Caco-2 (cell line): ENCODE measurements at regions of chr12 and their contacts with region 1.

Region 1: GRCh38 chr12:26360062-26360461 is 164.7 kb downstream of the SSPN start:
- DNase-seq: no peak
- H3K4me3 ChIP-seq: no peak overlapping the region
- H3K4me3 Mint-ChIP-seq: no peak overlapping the region
- H3K27ac Mint-ChIP-seq: no peak overlapping the region
- H3K4me1 ChIP-seq: peaks cover 12% of the 10 kb centered on the region
- H3K4me1 Mint-ChIP-seq: peaks cover 6% of the 10 kb centered on the region
- H3K27me3 ChIP-seq: no peaks in the 10 kb centered on the region
- H3K27me3 Mint-ChIP-seq: no peaks in the 10 kb centered on the region
- CTCF ChIP-seq: no peak

Region 2: DNA sequence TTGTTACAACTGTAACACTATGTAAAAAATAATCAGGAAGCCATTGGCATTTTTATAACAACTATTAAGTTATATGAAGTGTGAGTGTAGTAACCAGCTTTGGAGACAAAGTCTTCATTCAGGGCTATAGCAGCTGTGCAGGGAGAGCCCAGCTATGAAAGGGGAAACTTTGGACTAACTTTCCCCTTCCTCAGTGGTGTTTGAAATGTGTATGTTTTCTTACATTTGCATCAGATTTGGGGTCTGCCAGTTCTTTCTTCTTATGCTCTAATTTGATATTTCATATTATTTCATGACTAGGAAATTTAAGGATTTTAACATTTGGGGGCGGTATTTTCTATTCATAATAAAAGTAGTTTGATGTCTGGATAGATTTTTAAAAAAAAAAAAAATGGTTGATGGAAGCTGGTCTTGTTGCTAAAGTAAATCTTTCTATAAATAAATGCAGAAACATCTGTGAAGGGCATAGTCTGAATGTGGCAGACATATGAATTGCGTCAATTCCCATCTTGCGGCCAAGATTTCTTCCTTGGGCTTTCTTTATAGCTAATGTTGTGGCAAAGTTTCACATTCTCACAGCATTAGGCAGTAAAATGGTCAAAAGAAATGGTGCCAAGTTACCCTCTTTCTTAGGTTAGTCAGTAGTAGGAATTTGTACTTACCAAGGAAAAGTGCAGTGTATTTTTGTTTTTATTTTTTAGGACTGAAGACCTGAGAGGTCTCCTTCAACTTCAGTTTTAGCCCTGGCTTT is 366.0 kb before region 1 on chr12:
- CTCF ChIA-PET with region 1: no interaction called
- POLR2A ChIA-PET with region 1: no interaction called
- intact Hi-C with region 1: no loop called
- DNase-seq: no peak
- H3K4me3 ChIP-seq: no peak overlapping the region
- H3K4me3 Mint-ChIP-seq: no peak overlapping the region
- H3K27ac Mint-ChIP-seq: peak overlapping the region; percentile 60
- H3K4me1 ChIP-seq: peaks cover 10% of the 10 kb centered on the region
- H3K4me1 Mint-ChIP-seq: peaks cover 45% of the 10 kb centered on the region
- H3K27me3 ChIP-seq: no peaks in the 10 kb centered on the region
- H3K27me3 Mint-ChIP-seq: no peaks in the 10 kb centered on the region
- CTCF ChIP-seq: no peak

Region 3: DNA sequence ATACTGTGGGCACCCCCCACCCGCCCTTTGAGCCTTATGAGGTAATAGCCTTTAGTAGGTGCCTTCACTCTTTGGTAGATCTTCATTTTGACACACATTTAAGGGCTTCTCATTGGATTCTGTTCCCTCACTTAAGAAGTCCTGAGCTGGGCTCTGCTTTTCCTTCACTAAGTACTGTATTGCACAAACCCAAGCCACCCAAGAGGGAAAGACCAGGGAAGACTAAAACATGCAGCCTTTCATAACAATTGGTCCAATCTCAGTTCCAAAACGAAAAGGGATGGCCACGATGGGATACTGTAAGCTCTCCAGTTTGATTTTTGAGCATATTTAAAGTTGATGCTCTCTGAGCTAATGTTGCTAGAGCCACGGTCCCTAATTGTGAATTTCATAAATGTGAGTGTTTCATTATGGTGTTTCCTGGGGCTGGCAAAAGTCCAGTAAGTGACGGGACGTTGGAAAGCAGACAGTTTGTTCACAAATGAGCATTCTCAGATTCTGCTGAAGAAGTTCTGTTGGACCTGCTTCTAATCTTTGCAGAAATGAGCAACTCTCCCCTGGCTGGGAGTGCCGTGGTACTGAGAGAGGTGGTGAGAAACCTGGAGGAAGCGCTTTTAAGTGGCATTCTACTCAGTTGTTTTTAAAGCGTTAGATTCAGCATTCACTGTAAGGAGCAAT is 155.3 kb before region 1 on chr12:
- CTCF ChIA-PET with region 1: no interaction called
- POLR2A ChIA-PET with region 1: no interaction called
- intact Hi-C with region 1: no loop called
- DNase-seq: no peak
- H3K4me3 ChIP-seq: no peak overlapping the region
- H3K4me3 Mint-ChIP-seq: no peak overlapping the region
- H3K27ac Mint-ChIP-seq: no peak overlapping the region
- H3K4me1 ChIP-seq: no peaks in the 10 kb centered on the region
- H3K4me1 Mint-ChIP-seq: no peaks in the 10 kb centered on the region
- H3K27me3 ChIP-seq: no peaks in the 10 kb centered on the region
- H3K27me3 Mint-ChIP-seq: peaks cover 6% of the 10 kb centered on the region
- CTCF ChIP-seq: no peak

Region 4: GRCh38 chr12:26340649-26341048 is 19.4 kb before region 1 on chr12:
- CTCF ChIA-PET with region 1: no interaction called
- POLR2A ChIA-PET with region 1: no interaction called
- intact Hi-C with region 1: no loop called
- DNase-seq: no peak
- H3K4me3 ChIP-seq: no peak overlapping the region
- H3K4me3 Mint-ChIP-seq: no peak overlapping the region
- H3K27ac Mint-ChIP-seq: no peak overlapping the region
- H3K4me1 ChIP-seq: no peaks in the 10 kb centered on the region
- H3K4me1 Mint-ChIP-seq: no peaks in the 10 kb centered on the region
- H3K27me3 ChIP-seq: no peaks in the 10 kb centered on the region
- H3K27me3 Mint-ChIP-seq: no peaks in the 10 kb centered on the region
- CTCF ChIP-seq: no peak

Region 5: DNA sequence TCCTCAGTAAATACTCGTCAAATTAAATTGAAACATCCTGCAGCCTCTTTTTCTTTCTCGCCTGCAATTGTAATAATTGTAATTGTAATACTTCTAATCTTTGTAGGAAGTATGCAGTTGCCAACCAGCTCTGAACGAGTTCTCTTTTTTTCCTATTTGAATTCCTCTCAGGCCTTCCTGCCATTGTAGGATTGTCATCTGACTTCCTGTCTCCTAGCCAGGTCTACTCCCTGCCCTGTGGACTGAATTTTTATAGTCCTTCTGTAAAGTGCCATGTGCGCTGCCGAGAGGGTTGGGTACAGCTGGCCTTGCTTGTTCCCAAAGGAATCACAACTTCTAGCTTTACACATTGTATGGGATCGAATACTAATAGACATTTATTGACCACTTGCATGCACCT is 18.6 kb after region 1 on chr12:
- CTCF ChIA-PET with region 1: no interaction called
- POLR2A ChIA-PET with region 1: interaction called, 14 read pairs
- intact Hi-C with region 1: no loop called
- DNase-seq: no peak
- H3K4me3 ChIP-seq: no peak overlapping the region
- H3K4me3 Mint-ChIP-seq: no peak overlapping the region
- H3K27ac Mint-ChIP-seq: no peak overlapping the region
- H3K4me1 ChIP-seq: no peaks in the 10 kb centered on the region
- H3K4me1 Mint-ChIP-seq: no peaks in the 10 kb centered on the region
- H3K27me3 ChIP-seq: no peaks in the 10 kb centered on the region
- H3K27me3 Mint-ChIP-seq: no peaks in the 10 kb centered on the region
- CTCF ChIP-seq: no peak

Region 6: GRCh38 chr12:26389348-26389747 is 29.3 kb after region 1 on chr12:
- CTCF ChIA-PET with region 1: no interaction called
- POLR2A ChIA-PET with region 1: no interaction called
- intact Hi-C with region 1: loop called (anchors 1 kb)
- DNase-seq: peak in 1 of 2 experiments; percentile 69
- H3K4me3 ChIP-seq: no peak overlapping the region
- H3K4me3 Mint-ChIP-seq: peak overlapping the region; percentile 15
- H3K27ac Mint-ChIP-seq: peak overlapping the region; percentile 5
- H3K4me1 ChIP-seq: peaks cover 15% of the 10 kb centered on the region
- H3K4me1 Mint-ChIP-seq: peaks cover 12% of the 10 kb centered on the region
- H3K27me3 ChIP-seq: no peaks in the 10 kb centered on the region
- H3K27me3 Mint-ChIP-seq: no peaks in the 10 kb centered on the region
- CTCF ChIP-seq: no peak